ENCODE measurements at regions of chr3 and their contacts with region 1.

Region 1: DNA sequence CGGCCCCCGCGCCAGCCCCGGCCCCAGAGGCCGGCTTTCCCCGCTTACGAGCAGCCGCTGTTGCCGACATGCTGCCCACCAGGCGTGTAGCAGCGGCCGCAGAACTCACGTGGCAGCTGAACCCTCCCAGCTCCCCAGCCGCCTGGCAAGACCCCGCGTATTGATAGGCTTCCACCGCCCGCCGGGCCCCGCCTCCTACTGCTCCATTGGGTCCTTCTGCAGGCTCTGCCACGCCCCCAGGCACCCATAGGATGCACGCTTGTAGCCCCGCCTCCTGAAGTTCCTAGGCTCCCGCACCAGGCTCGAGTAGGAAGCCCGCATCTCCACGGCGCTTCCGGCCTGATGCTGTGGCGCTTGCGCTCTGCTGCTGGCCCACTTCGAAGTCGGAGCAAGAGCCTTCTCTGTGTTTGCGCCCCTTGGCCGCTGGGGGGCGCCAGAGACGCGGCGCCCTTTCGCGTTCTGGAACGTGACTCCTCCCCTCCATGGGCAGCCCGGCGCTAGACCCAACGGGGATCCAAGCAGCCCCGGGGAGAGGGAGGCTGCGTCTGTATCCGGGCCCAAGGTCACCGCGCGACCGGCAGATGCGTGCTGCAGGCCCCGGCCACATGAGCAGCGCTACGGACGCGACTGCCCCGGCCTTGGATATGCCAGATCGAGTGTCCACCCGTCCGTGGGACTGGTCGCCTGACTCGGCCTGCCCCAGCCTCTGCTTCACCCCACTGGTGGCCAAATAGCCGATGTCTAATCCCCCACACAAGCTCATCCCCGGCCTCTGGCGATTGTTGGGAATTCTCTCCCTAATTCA is at the starts of genes PARP3 and RRP9:
- DNase-seq: peak; percentile 100
- H3K4me3 ChIP-seq: peak within 1 kb of the TSS; percentile 77 to 88 (median 82)
- H3K27ac ChIP-seq: peak within 1 kb of the TSS; percentile 88 to 95 (median 90)
- H3K4me1 ChIP-seq: peaks cover 31 to 46% (median 33%) of the 10 kb centered on the region in 4 donors
- H3K27me3 ChIP-seq: no peaks in the 10 kb centered on the region
- CTCF ChIP-seq: peak; percentile 99 to 100 (median 99)
- EP300 ChIP-seq: no peak
- POLR2A ChIP-seq: no peak
- total RNA-seq, gene PARP3: 22.9 to 37.9 (median 30.1) TPM
- total RNA-seq, gene RRP9: 9.6 to 20.7 (median 15.5) TPM

Region 2: DNA sequence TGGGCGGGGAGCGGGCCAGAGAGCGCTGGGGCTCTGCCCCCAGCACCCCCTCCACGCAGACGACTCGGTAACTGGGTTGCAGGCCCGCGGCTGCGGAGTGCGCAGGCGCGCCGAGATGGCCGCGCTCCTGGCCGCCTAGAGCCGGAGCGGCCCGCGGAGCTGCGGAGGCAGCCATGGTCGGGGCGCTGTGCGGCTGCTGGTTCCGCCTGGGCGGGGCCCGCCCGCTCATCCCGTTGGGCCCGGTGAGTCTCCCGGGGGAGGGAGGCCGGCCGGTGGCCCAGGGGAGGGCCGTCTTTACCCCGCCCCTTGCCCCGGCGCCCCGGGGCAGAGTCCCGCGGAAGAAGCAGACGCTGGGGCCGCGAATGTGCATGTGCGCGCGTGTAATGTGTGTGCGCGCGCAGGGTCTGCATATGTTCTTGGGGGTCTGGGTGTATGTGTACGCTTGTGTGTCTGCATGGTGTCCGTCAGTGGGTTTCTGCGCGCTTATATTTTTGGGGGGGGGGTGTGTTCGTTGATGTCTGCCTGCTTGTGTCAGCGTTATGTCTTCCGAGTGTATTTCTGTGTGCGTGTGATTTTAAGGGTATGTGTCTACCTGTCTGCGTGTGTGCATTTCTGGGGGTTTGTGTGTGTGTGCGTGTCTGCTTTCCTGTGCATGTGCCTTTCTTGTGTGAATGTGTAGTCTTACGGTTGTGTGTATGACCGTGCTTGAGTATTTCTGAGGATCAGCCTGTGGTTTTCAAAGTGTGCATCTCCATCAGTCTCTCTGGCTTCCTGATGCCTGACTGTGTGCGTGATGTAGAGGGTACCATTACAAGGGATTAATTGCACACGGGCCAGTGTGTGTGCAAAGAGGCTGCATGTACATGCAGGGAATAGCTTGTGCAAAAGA is 33.2 kb after region 1 on chr3 and contains the start of gene ABHD14A:
- intact Hi-C with region 1: loop called (anchors 2 kb)
- DNase-seq: no peak
- H3K4me3 ChIP-seq: peak within 1 kb of the TSS; percentile 55 to 75 (median 70)
- H3K27ac ChIP-seq: peak within 1 kb of the TSS; percentile 93 to 96 (median 96)
- H3K4me1 ChIP-seq: peaks cover 27 to 54% (median 35%) of the 10 kb centered on the region in 4 donors
- H3K27me3 ChIP-seq: no peaks in the 10 kb centered on the region
- CTCF ChIP-seq: no peak
- EP300 ChIP-seq: no peak
- POLR2A ChIP-seq: no peak
- total RNA-seq, gene ABHD14A: 10.0 to 22.3 (median 15.8) TPM

Region 3: DNA sequence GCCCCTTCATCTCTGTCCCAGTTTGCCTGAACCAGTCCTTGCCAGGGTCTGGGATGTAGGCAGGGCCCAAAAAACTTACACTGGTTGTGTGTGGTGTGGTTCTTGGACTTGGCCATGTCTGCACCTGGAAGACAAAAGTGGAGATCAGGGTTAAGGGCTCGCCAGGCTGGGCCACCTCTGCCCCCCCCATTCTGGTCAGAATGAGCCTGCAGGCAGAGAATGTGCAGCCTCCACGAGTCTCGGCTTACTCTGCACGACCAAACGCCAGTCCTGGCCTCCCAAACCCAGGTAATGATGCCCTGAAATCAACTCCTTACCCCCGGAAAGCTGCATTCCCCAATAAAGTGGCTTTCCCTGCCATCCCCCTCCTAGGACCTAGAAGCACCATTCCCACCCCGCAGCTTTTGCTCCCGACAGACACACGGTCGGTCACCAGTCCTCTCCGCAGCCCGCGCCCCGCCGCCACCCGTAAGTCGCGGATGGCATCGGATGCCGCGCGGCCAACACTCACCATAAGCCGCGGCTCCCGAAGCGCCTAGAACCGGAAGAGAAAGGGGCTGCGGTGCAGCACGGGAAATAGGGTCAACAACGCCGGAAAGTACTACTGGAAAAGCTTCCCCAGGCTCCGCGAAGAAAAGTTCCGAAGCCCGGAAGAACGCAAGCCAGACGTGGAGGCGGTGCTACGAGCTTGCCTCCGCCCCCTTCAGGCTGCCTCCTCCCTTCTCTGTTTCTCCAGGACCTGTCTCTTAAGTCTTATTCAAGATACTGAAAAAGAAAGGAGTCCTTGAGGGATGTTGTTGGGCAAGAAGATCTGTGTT is 53.6 kb after region 1 on chr3 and contains the start of gene RPL29:
- intact Hi-C with region 1: loop called (anchors 1 kb)
- DNase-seq: peak; percentile 97
- H3K4me3 ChIP-seq: peak within 1 kb of the TSS; percentile 59 to 87 (median 70)
- H3K27ac ChIP-seq: peak within 1 kb of the TSS; percentile 78 to 88 (median 84)
- H3K4me1 ChIP-seq: peaks cover 12 to 47% (median 32%) of the 10 kb centered on the region in 4 donors
- H3K27me3 ChIP-seq: peaks cover 0 to 27% (median 0%) of the 10 kb centered on the region in 4 donors
- CTCF ChIP-seq: peak; percentile 9 to 58 (median 55)
- EP300 ChIP-seq: no peak
- POLR2A ChIP-seq: peak; percentile 69
- total RNA-seq, gene RPL29: 786 to 1,908 (median 1,382) TPM

Region 4: DNA sequence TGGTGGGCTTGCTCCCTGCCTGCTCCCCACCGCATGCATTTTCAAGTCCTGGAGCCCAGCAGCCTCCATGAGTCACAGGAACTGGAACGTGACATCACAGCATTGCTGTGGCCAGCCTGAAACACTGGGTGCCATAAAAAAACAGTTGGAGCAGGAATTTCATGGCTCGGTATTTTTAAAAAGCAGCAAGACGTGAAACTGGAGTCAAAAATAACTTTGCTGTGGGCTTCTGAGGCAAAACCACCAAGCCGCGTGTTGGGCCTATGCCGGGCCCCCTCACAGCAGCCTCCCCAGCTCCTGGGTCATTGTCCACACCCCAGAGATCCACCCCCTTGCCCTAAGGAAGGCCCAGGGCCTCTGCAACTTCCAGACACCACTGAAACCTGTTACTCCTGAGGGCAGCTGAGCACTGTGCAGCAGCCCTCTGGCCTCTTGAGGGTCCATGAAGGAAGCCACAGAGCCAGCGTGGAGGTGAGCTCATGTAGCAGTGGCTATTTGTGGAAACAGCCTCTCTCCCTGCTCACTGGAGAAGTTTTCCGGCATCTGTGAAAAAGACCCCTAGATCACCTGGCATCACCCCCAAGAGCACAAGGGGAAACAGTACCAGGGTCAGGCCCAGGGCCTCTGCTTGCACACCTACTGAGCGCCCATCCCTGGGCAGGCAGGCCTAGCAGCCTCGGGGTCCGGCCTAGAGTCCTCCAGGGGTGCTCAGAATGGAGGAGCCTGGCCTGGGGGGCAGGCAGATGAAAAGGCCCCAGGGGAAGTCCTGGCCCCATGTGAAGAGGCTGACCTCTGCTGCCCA is 148.3 kb after region 1 on chr3:
- intact Hi-C with region 1: no loop called
- DNase-seq: no peak
- H3K4me3 ChIP-seq: no peak overlapping the region
- H3K27ac ChIP-seq: peak overlapping the region; percentile 42 to 54 (median 52)
- H3K4me1 ChIP-seq: peaks cover 37 to 50% (median 39%) of the 10 kb centered on the region in 4 donors
- H3K27me3 ChIP-seq: no peaks in the 10 kb centered on the region
- CTCF ChIP-seq: no peak
- EP300 ChIP-seq: no peak
- POLR2A ChIP-seq: no peak

Region 5: GRCh38 chr3:52144034-52144795 is 202.2 kb after region 1 on chr3:
- intact Hi-C with region 1: loop called (anchors 5 kb)
- DNase-seq: peak; percentile 96
- H3K4me3 ChIP-seq: no peak overlapping the region
- H3K27ac ChIP-seq: no peak overlapping the region
- H3K4me1 ChIP-seq: peaks cover 3 to 5% (median 4%) of the 10 kb centered on the region in 4 donors
- H3K27me3 ChIP-seq: no peaks in the 10 kb centered on the region
- CTCF ChIP-seq: peak; percentile 94 to 99 (median 97)
- EP300 ChIP-seq: no peak
- POLR2A ChIP-seq: no peak